ENCODE measurements at regions of chr1 and their contacts with region 1.

Region 1: GRCh38 chr1:108199781-108200570 is at the start of gene SLC25A24:
- DNase-seq: peak; percentile 90 to 92
- ATAC-seq: peak; percentile 97
- H3K4me3 ChIP-seq: peak within 1 kb of the TSS; percentile 83 to 93
- H3K27ac ChIP-seq: peak within 1 kb of the TSS; percentile 83 to 88
- H3K4me1 ChIP-seq: peaks cover 0 to 3% of the 10 kb centered on the region in 2 donors
- H3K27me3 ChIP-seq: no peaks in the 10 kb centered on the region
- total RNA-seq, gene SLC25A24: 26.5 to 28.1 TPM

Region 2: DNA sequence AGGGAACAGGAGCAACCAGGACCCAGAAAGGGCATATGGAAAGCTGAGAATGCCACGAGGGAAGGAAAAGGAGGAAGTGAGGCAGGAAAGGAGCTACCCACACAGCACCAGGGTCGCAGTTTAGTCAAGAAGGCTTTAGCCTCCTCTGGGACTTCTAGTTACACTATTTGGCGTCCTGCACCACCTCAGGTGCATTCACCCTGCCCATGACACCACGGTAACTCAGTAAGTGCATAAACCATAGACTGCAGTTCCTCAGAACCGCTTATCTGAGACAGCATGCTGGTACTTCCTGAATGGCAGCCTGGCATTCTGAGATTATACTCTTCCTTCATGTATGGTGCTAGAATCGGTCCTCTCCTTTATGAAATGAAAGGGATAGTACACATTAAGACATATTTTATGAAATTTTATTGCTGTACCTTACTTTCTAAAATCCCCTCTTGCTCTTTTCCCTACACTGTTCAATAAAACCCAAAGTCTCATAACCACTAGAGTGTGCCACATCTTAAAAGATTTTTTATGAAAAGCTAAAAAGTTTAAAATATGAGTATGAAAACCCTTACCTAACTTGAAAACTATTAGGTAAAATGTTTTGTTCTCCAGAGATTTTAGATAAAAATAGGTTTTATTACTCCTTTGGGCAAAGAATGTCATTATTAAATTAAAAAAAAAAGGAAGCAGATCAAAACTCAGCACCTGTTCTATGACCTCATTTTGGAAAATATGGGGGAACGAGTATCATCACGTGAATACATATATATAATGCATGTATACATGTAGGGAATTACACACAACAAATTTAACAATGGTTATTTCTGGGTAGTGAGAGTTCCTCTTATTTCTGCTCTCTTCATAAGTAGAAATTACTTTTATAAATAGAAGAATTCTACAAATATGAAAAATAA is 302.3 kb before region 1 on chr1:
- intact Hi-C with region 1: no loop called
- DNase-seq: no peak
- ATAC-seq: no peak
- H3K4me3 ChIP-seq: no peak overlapping the region
- H3K27ac ChIP-seq: no peak overlapping the region
- H3K4me1 ChIP-seq: no peaks in the 10 kb centered on the region
- H3K27me3 ChIP-seq: no peaks in the 10 kb centered on the region

Region 3: GRCh38 chr1:108049178-108049819 is 150.7 kb before region 1 on chr1:
- intact Hi-C with region 1: no loop called
- DNase-seq: peak in 1 of 2 donors; percentile 73
- ATAC-seq: no peak
- H3K4me3 ChIP-seq: no peak overlapping the region
- H3K27ac ChIP-seq: no peak overlapping the region
- H3K4me1 ChIP-seq: no peaks in the 10 kb centered on the region
- H3K27me3 ChIP-seq: no peaks in the 10 kb centered on the region

Region 4: DNA sequence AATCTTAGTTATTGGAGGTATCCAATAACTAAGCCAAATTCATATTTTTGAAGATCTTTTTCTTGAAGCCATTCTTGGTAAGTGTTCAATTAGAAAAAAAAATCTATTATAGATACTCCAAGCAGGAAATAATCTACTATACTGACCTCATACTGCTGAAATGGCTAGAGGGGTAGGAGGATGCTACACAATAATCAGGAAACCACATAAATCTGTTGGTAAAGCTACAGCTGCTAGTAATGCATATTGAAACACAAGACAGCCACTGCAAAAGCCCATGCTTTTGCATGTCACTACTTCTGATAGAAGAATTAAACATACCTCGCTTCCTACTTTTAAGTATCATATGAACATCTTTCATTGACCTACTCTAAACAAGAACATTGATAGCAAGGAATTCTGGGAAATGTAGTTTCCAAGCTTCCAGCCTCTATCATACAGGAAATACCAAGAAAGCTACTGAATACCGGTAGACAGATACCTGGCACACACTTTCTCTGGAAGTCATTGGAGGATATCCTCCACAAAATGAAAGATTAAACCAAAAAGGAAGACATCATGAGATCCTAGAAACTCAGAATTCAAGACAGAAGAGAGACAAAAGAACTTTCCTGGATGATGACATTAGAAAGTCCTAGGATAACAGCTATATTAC is 132.0 kb before region 1 on chr1:
- intact Hi-C with region 1: no loop called
- DNase-seq: no peak
- ATAC-seq: no peak
- H3K4me3 ChIP-seq: no peak overlapping the region
- H3K27ac ChIP-seq: no peak overlapping the region
- H3K4me1 ChIP-seq: no peaks in the 10 kb centered on the region
- H3K27me3 ChIP-seq: no peaks in the 10 kb centered on the region

Region 5: GRCh38 chr1:108141621-108142020 is 58.4 kb before region 1 on chr1:
- intact Hi-C with region 1: loop called in 1 of 2 experiments (anchors 5 kb)
- DNase-seq: no peak
- ATAC-seq: no peak
- H3K4me3 ChIP-seq: no peak overlapping the region
- H3K27ac ChIP-seq: no peak overlapping the region
- H3K4me1 ChIP-seq: peaks cover 0 to 6% of the 10 kb centered on the region in 2 donors
- H3K27me3 ChIP-seq: no peaks in the 10 kb centered on the region

Measured in aorta (tissue), 5 donors.